ENCODE measurements at regions of chr18 and their contacts with region 1.

Region 1: DNA sequence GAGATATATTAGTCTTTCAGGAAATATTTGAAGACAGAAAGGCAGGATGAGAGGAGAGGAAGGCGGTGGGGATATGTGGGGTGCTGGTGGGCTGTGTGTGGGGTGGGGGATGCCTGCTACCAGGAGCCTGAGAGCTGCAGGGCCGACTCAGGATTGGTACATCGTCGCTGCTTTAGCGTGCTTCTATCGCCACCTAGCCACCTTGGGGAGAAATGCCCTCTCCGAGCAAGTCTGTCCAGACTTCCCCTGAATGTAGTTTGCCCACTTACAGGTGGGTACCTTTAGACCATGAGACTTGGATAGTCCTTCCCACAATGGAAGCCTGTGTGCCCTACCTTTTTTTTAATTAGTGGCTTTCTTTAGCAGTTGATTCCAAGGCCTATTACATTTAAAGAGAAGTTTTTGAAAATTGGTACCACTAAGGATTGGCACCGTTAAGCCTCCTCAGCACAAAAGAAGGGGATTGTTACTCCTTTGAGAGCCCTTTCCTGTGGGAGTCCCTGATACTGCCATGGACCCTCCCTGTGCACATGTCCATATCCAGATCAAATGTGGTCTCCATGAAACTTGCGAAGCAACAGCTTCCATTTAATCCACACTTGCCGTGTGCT is 114.1 kb upstream of the NDUFV2 start:
- DNase-seq: peak; percentile 84
- H3K4me3 Mint-ChIP-seq: no peak overlapping the region
- H3K27ac Mint-ChIP-seq: no peak overlapping the region
- H3K4me1 Mint-ChIP-seq: no peaks in the 10 kb centered on the region
- H3K27me3 Mint-ChIP-seq: peaks cover 11% of the 10 kb centered on the region

Region 2: DNA sequence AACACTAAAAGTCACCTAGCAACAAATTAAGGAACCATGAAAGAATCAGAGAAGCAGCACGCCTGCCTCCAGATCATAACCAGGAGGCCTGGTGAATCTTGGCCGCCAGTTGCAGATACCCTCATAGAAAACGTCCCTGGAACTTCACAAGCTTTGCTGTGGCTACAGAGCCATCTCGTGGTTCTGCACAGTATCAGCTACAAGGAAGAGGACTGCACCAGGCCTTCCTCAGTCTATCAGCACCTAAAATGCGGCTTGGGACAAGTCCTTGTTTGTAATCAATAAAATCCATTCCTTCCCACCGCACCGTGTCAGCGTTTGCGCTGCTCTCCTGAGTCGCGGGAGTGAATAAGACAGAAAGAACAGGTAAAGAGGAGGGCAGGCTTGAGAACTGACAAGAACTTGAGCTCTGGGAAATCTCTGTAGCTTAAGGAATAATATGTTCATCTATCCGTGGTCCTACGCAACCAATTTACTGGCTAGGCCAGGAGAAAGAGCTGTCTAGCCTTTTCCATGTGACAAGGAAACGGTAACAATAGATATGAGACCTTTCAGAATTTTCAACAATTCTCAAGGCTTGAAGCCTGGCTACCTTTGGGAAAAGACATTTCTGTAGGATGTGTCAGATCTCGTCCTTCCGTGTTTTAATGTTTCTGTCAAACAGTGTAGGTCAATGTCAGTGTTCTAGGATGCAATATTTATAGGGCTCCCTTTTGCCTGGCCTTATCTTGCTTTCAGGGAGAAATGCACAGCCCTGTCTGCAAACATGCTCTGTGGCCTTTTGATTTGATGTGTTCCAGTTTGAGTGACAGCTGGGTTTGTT is 507.6 kb before region 1 on chr18:
- intact Hi-C with region 1: loop called (anchors 10 kb)
- DNase-seq: no peak
- H3K4me3 Mint-ChIP-seq: no peak overlapping the region
- H3K27ac Mint-ChIP-seq: no peak overlapping the region
- H3K4me1 Mint-ChIP-seq: peaks cover 1% of the 10 kb centered on the region
- H3K27me3 Mint-ChIP-seq: peaks cover 2% of the 10 kb centered on the region

Region 3: DNA sequence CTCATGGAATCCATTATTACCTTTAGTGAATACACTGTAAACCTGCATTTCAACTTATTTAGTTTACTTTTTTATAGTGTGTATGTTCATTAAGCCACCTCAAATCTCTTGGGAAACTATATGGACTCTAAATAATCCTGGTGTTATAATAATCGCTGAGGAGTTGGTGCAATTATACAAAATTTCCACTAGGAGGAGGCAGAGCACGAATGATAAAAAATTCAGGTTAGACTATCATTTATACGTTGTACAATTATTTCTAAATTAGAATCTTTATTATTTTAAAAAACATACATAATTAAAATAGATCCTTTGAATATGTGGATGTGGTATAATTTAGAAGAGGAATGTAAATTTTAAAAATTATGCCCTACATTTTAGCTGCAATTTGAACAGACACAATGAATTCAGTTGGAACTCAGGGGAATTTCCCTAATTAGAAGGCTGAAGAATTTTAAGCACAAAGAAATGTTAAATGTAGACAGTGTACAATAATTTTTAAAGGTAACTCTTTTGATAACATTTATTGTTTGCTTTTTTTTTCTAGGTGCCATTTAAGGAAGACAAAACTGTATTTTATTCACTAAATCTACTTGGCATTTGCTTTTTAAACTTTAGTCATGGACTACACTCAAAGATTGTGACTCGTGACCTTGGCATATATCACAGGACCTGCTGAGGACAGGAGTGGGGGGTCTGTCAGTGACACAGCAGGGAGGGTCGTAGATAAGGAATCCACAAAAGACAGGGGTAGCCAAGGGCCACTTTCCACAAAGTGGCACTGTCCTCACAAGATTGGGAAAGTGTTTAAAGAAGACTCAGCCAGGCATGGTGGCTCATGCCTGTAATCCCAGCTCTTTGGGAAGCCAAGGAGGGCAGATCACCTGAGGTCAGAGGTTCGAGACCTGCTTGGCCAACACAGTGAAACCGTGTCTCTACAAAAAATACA is 333.6 kb before region 1 on chr18:
- intact Hi-C with region 1: loop called (anchors 1 kb)
- DNase-seq: no peak
- H3K4me3 Mint-ChIP-seq: no peak overlapping the region
- H3K27ac Mint-ChIP-seq: no peak overlapping the region
- H3K4me1 Mint-ChIP-seq: no peaks in the 10 kb centered on the region
- H3K27me3 Mint-ChIP-seq: peaks cover 23% of the 10 kb centered on the region

Region 4: GRCh38 chr18:8696749-8697211 is 291.6 kb before region 1 on chr18:
- intact Hi-C with region 1: loop called (anchors 1 kb)
- DNase-seq: peak; percentile 93
- H3K4me3 Mint-ChIP-seq: no peak overlapping the region
- H3K27ac Mint-ChIP-seq: no peak overlapping the region
- H3K4me1 Mint-ChIP-seq: no peaks in the 10 kb centered on the region
- H3K27me3 Mint-ChIP-seq: peaks cover 24% of the 10 kb centered on the region

Region 5: DNA sequence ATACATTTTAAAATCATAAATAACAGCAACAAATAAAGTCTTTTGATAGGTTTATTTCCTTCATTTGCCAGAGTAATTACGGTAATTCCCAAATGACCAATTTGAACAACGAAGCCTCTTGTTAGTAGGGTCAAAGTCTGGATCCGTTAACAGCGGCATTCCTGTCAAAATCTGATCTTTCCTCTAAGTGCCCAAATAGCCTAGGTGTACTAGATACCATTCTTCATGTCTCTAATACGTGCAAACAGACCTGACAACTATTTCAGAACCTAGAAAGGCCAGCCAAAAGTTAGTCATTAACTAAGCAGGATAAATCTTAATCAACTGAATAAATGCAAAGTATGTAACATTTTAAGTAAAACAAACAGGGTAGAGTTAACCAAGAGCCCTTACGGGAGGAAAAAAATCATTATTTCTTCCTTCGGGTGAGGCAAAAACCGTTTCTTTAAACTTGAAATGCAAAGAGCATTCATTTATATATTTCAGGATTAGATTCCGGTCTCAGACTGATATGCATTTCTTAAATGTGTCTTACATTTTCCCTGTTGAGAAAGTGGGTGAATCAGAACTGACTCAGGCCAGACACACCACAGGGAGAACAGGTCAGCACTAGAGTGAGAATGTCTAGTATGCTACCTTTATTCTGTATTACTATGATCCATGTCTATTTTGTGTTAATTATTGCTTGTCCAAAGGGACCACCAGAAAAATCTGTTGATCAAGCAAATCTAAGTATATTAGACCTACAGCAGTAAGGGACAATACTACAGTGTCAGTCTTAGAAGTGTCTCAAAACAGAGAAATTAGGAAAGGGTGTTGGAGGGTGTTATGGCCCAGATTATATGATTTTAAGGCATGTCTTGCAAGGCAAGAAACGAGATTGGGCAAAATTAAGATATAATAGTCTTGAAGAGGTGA is 27.4 kb before region 1 on chr18:
- intact Hi-C with region 1: no loop called
- DNase-seq: no peak
- H3K4me3 Mint-ChIP-seq: no peak overlapping the region
- H3K27ac Mint-ChIP-seq: no peak overlapping the region
- H3K4me1 Mint-ChIP-seq: no peaks in the 10 kb centered on the region
- H3K27me3 Mint-ChIP-seq: peaks cover 7% of the 10 kb centered on the region

Measured in activated CD4-positive, alpha-beta T cell treated with anti-CD3 and anti-CD28 coated beads, Interleukin-2, amount 10 ng/mL, durations not matched to agents 24 days and 14 days (primary cell).